ENCODE measurements at regions of chr13 and their contacts with region 1.

Region 1: DNA sequence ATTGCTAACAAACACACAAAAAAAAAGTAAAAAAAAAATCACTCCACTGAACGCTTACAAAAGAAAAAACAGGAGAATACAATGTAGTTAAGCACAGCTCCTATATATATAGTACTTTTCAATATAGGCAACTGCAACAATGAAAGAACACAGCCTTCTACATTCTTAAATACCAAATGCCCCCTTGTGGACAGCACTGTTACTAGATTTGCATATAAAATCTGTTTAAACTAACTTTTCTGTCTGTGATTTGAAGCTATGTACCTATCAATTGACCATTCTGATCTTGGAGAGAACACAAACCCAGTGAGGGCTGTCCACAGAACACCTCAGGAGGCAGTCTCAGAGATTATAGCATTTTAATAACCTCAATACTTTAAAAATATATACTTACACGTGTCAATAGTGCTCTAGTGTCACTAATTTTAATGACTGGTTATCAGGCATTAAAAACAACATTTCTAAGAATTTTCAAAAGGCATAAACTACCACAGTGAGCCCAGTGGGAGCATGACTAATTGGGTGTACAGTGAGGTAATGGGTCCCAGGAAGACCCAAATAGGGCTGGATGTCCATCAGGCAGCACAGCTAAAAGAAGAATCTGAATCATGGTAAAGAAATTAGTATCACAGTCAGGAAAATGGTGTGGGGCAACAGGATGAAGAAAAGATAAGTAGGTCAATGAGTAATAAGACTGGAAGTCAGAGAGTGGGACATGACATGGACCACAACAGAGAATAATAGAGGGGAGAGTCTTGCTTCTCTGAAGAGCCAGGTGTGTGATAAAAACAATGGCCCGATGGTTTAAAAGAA is 22.2 kb downstream of the CCDC169 start:
- DNase-seq: peak; percentile 55
- H3K4me3 ChIP-seq: no peak overlapping the region
- H3K27ac ChIP-seq: no peak overlapping the region
- H3K4me1 ChIP-seq: no peaks in the 10 kb centered on the region
- H3K27me3 ChIP-seq: no peaks in the 10 kb centered on the region
- CTCF ChIP-seq: peak; percentile 29 to 77 (median 64)
- POLR2A ChIP-seq: no peak

Region 2: DNA sequence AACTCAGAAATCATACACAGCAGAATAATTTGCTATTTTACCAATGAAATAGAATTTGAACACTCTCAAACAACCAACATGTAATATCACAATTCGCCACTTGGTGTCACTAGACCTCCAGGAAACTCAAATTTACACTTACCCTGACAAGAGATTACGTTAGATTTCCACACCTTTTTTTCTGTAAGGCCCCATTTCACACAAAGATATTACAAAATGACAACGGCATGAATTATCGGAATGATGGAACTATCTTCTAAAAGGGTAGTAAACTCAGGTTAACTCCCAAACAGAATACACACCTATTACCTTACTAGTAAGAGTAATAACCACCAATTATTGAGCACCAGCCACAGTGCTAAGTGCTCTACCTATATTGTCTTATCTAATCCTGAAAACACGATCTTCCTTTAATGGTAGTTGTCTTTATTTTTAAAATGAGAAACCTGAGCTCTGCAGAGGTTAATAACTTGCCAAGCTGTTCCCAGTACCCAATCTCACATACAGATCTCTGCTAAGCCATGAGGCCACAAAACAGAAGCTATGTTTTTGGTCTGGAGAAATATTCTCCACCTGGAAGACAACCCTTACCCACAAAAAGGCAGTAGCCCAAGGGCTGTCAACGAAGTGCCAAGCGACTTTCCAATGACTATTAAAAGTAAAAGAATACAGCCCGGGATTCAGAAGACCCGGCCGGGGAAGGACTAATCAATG is 296.6 kb before region 1 on chr13:
- intact Hi-C with region 1: loop called (anchors 2 kb)
- DNase-seq: peak; percentile 30
- H3K4me3 ChIP-seq: no peak overlapping the region
- H3K27ac ChIP-seq: no peak overlapping the region
- H3K4me1 ChIP-seq: no peaks in the 10 kb centered on the region
- H3K27me3 ChIP-seq: no peaks in the 10 kb centered on the region
- CTCF ChIP-seq: peak; percentile 70 to 92 (median 88)
- POLR2A ChIP-seq: no peak

Region 3: GRCh38 chr13:36154567-36155291 is 120.7 kb before region 1 on chr13:
- intact Hi-C with region 1: loop called (anchors 10 kb)
- DNase-seq: no peak
- H3K4me3 ChIP-seq: no peak overlapping the region
- H3K27ac ChIP-seq: no peak overlapping the region
- H3K4me1 ChIP-seq: no peaks in the 10 kb centered on the region
- H3K27me3 ChIP-seq: no peaks in the 10 kb centered on the region
- CTCF ChIP-seq: no peak
- POLR2A ChIP-seq: no peak